Head of caudate nucleus (tissue), 42 donors: ENCODE measurements at regions of chr1 and their contacts with region 1.

Region 1: DNA sequence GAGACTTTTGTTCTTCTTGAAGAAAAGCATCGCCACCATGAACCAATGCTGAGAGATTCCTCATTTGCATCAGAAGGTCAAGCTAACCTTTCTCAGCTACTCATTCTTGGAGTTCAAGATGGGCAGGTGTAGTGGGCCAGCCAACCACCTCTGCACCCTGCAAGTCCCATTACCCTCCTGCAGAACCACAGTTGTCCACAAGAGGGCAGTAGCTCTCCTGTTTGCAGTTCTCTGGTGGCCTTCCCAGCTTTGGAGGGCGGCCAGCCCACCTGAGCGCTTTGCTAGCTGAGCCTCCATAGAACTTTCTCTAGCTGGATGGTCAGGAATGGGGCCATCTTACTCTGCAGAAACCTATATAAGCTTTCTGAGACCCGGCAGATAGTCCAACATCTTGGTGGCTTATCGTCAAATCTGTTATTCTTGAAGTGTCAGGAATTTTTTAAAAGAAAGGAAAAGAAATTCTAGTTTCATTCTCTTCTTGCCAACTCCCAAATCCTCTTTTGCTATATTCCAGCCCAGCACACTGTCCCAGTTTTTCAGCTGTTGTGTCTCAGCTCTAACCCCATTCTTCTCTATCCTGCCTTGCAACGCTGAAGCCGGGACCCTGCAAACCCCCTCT is 11.0 kb upstream of the LMX1A start:
- DNase-seq: peak in 41 of 42 donors; percentile 52 to 91 (median 81)

Region 2: GRCh38 chr1:165119086-165119485 is 248.4 kb before region 1 on chr1:
- intact Hi-C with region 1: no loop called
- DNase-seq: no peak

Region 3: GRCh38 chr1:165144757-165145397 is 222.6 kb before region 1 on chr1:
- intact Hi-C with region 1: loop called (anchors 10 kb)
- DNase-seq: peak; percentile 26 to 88 (median 72)